Activated CD4-positive, alpha-beta memory T cell treated with anti-CD3 and anti-CD28 coated beads for 36 hours (primary cell): ENCODE measurements at regions of chr20 and their contacts with region 1.

Region 1: DNA sequence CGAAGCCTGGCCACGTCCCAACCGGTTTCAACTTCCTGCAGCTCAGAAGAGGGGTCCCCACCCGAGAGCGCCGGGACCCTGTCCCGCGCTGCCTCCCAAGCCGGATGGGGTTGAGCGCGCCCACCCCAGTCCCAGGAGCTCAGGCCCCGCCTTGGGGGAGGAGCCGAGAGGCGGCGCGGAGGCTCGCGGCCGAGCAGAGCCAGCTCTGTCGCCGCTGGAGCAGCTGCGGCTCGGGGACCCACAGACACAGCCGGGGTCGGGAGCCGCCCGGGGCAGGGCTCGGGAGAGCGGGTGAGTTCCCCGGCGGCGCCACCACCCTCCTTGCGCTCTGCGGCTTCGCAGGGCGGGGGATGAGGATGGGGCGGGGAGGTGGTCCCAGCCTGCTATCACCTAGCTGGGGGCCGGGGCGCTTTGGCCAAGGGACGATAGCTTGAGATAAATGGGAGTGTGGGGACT is at the start of gene PPP1R16B:
- DNase-seq: peak; percentile 85
- H3K4me3 Mint-ChIP-seq: peak within 1 kb of the TSS; percentile 86
- H3K27ac Mint-ChIP-seq: peak within 1 kb of the TSS; percentile 96
- H3K4me1 Mint-ChIP-seq: peaks cover 51% of the 10 kb centered on the region
- H3K27me3 Mint-ChIP-seq: no peaks in the 10 kb centered on the region
- total RNA-seq, gene PPP1R16B: 111 to 114 TPM

Region 2: DNA sequence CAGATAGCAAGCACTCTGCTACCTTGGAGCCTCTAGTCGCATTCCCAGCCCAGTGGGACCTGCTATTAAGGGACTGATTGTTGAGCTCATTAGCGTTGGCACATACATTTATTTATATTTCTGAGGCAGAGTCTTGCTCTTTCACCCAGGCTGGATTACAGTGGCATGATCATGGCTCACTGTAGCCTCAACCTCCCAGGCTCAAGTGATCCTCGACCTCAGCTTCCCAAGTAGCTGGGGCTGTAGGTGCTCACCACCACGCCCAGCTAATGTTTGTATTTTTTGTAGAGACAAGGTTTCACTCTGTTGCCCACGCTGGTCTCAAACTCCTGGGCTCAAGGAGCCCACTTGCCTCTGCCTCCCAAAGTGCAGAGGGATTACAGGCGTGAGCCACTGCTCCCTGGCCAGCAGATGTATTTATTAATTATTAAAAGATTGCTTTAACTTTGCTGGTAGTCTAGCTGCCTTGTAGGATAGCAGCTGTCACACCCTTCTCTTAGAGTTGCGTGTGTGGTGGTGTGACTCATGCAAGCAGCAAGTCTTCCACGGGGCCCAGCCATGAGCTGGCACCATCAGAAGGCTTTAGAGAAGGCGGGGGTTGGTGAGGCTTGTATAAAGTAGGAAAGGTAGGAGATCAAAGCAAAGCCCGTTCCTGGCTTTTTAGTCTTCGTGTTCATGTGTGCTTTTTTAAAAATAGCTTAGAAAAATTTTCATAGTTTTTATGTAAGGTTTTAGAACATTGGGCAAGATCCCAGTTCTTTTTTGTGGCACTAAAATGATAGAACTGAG is 40.8 kb before region 1 on chr20:
- CTCF ChIA-PET with region 1: interaction called, 4 read pairs
- POLR2A ChIA-PET with region 1: interaction called, 3 read pairs
- intact Hi-C with region 1: loop called (anchors 1 kb)
- DNase-seq: peak; percentile 79
- H3K4me3 Mint-ChIP-seq: no peak overlapping the region
- H3K27ac Mint-ChIP-seq: peak overlapping the region; percentile 71
- H3K4me1 Mint-ChIP-seq: peaks cover 26% of the 10 kb centered on the region
- H3K27me3 Mint-ChIP-seq: no peaks in the 10 kb centered on the region

Region 3: GRCh38 chr20:38833857-38834164 is 28.3 kb after region 1 on chr20:
- CTCF ChIA-PET with region 1: interaction called, 3 read pairs
- POLR2A ChIA-PET with region 1: interaction called, 4 read pairs
- intact Hi-C with region 1: loop called (anchors 1 kb)
- DNase-seq: peak; percentile 72
- H3K4me3 Mint-ChIP-seq: peak overlapping the region; percentile 43
- H3K27ac Mint-ChIP-seq: peak overlapping the region; percentile 92
- H3K4me1 Mint-ChIP-seq: peaks cover 80% of the 10 kb centered on the region
- H3K27me3 Mint-ChIP-seq: no peaks in the 10 kb centered on the region

Region 4: DNA sequence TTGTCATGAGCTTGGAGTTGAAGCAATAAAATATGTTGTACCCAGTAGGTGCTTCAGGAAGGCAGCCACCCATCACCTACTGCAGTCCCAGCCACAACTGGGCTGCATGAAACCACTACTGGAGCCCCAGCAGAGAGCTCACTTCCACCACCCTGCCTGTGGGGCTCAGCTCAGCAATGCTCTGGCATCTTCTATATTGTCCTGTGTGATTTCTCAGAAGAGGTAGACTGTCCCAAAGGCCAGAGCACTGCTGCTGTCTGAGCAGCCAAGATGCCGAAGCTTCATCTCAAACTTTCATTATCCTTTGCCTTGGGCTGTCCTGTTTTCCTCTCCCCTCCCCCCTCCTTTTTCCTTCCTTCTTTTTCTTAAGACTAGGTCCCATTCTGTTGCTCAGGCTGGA is 283.5 kb after region 1 on chr20:
- CTCF ChIA-PET with region 1: no interaction called
- POLR2A ChIA-PET with region 1: no interaction called
- intact Hi-C with region 1: no loop called
- DNase-seq: no peak
- H3K4me3 Mint-ChIP-seq: no peak overlapping the region
- H3K27ac Mint-ChIP-seq: no peak overlapping the region
- H3K4me1 Mint-ChIP-seq: no peaks in the 10 kb centered on the region
- H3K27me3 Mint-ChIP-seq: peaks cover 7% of the 10 kb centered on the region